ENCODE measurements at regions of chr10 and their contacts with region 1.

Region 1: DNA sequence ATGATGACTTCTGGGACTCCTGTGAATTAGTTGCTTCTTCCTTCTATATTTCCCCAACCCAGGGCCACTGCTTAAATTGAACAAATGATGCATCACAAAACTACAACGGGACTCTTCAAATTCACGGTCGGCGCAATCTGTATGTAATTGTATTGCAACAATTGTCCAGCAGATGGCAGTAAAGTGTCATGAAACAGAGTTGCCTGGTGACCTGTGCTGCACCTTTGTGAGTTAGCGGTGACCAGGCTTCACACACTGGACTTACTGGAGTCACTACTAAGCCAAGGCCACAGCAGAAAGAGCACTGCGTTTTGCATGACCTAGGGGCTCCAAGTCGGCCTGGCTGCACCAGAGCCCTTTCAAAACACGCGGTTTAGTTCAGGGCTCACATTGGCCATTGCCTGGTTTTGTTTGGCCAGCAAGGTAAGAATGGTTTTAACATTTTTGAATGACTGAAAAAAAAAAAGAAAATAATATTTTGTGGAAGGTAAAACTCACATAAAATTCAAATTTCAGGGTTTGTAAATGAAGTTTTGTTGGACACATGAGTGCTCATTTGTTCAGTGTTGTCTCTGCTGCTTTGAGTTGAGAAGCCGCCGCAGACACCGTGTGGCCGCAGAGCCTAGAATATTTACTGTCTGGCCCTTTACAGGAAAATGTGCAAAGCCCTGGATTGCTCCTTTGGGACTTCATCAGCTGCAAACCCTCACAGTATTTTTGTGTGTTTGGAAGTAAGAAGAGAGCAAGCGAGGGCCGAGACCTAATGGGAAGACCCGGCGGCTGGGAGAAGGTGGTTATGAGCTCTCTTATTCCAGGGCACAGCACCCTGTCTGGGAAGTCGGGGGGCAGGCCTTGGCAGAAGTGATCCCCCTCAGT is 23.2 kb upstream of the ZNF32 start:
- DNase-seq: peak in 1 of 2 donors; percentile 79
- H3K4me3 ChIP-seq: no peak overlapping the region
- H3K27ac ChIP-seq: no peak overlapping the region
- H3K4me1 ChIP-seq: no peaks in the 10 kb centered on the region
- H3K27me3 ChIP-seq: no peaks in the 10 kb centered on the region
- CTCF ChIP-seq: peak; percentile 73 to 89 (median 80)

Region 2: GRCh38 chr10:43471935-43472720 is 199.8 kb before region 1 on chr10:
- intact Hi-C with region 1: no loop called
- DNase-seq: no peak
- H3K4me3 ChIP-seq: no peak overlapping the region
- H3K27ac ChIP-seq: no peak overlapping the region
- H3K4me1 ChIP-seq: no peaks in the 10 kb centered on the region
- H3K27me3 ChIP-seq: no peaks in the 10 kb centered on the region
- CTCF ChIP-seq: no peak

Region 3: DNA sequence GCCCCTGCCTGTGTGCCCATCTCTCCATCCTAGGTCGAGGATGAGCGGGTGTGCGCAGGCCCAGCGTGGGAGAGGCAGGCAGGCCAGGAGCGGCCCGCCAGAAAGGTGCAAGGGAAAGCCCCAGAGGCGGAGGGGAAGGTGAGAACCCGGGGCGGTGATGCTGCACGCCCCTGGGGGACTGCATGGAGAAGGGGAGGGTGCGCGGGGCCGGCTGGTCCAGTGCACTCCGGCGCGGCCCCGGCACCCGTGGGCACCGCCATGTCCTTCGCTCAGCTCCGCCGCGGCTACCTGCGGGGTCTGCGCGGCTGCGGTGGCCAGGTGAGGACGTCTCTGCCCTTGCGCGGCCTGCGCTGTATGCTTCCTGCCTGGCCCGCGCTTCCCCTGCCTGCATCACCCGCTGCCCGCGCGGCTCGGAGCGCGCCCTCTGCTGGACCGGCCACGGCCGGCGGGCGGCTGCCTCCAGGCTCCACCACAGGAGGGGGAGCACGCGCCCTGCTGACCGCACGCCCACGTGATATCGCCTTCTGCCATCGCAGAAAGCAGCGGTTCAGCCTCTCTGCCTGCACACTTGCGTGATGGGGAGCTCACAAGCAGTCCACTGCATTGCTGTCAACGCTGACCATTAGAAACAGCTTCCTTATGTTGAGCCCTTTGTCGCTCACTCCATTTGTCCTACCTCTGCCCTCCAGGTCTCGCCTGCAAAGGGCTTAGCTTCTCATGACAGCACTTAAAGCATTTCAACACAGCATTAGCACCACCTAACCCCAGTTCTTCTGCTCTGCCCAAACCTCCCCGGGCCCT is 639.1 kb after region 1 on chr10:
- intact Hi-C with region 1: loop called (anchors 5 kb)
- DNase-seq: peak; percentile 40 to 92
- H3K4me3 ChIP-seq: peak overlapping the region; percentile 49 to 59
- H3K27ac ChIP-seq: no peak overlapping the region
- H3K4me1 ChIP-seq: peaks cover 0 to 5% of the 10 kb centered on the region in 2 donors
- H3K27me3 ChIP-seq: no peaks in the 10 kb centered on the region
- CTCF ChIP-seq: peak; percentile 94 to 97 (median 95)

Region 4: DNA sequence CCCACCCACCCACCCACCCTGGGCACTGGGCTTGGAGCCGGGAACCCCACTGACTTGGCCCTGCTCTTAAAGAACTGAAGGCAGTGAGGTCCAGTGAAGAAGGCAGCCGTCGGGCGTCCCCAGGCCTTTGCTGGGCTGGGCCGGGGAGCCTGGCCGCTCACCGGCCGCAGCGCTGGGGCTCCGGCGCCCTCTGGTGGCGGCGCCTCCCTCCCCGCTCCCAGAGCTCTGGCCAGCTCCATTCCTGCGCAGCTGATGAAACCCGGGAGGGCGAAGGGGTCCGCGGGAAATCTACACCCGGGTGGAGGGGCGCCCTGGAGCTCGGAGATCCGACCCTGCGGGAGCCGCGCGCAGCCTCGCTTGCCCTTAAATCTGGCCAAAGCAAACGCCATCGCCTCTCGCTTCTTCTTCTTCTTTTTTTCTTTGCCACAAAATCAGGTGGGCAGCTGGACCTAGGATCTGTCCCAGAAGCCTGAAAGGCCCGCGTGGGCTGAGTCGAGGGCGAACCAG is 714.7 kb after region 1 on chr10:
- intact Hi-C with region 1: loop called (anchors 1 kb)
- DNase-seq: peak in 1 of 2 donors; percentile 77
- H3K4me3 ChIP-seq: peak overlapping the region in 1 of 2 donors; percentile 28
- H3K27ac ChIP-seq: no peak overlapping the region
- H3K4me1 ChIP-seq: peaks cover 0 to 8% of the 10 kb centered on the region in 2 donors
- H3K27me3 ChIP-seq: no peaks in the 10 kb centered on the region
- CTCF ChIP-seq: peak; percentile 86 to 95 (median 91)

Region 5: GRCh38 chr10:44569193-44570091 is 897.5 kb after region 1 on chr10:
- intact Hi-C with region 1: loop called (anchors 10 kb)
- DNase-seq: peak in 1 of 2 donors; percentile 87
- H3K4me3 ChIP-seq: no peak overlapping the region
- H3K27ac ChIP-seq: peak overlapping the region; percentile 19 to 79
- H3K4me1 ChIP-seq: peaks cover 9 to 14% of the 10 kb centered on the region in 2 donors
- H3K27me3 ChIP-seq: no peaks in the 10 kb centered on the region
- CTCF ChIP-seq: no peak

Region 6: GRCh38 chr10:44724415-44725174 is 1052.7 kb after region 1 on chr10:
- intact Hi-C with region 1: loop called (anchors 5 kb)
- DNase-seq: no peak
- H3K4me3 ChIP-seq: no peak overlapping the region
- H3K27ac ChIP-seq: peak overlapping the region; percentile 22 to 36
- H3K4me1 ChIP-seq: peaks cover 3 to 20% of the 10 kb centered on the region in 2 donors
- H3K27me3 ChIP-seq: no peaks in the 10 kb centered on the region
- CTCF ChIP-seq: no peak

Region 7: DNA sequence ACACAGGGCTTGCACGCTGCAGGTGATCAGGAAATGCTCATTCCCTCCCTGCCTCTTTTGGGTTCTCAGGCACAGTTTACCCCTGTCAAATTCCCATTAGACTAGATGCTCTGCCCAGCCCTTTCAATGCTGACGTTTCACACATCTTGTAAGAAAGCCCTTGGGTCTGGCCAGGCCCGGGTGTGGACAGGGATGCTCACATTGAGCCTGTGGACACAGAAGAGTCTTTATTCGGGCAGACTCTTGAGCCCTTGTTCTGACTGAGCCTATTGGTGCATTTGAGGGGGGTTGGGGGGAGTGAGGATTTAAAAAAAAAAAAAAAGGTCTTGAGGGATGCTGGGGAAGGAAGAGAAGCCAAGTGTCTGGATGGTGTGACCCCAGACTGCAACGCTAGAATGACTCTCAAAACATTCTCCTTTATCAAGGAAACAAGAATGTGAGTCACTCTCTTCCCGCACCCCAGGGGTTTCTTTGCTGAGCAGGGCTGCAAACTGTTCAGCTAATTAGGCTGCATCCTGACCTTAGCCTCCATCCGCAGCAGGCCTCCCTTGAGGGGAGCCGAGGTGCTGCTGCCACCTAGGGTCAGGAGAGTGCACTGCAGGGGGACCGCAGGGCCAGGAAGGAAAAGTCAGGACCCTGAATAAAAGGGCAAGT is 1185.6 kb after region 1 on chr10:
- intact Hi-C with region 1: loop called (anchors 2 kb)
- DNase-seq: peak in 1 of 2 donors; percentile 72
- H3K4me3 ChIP-seq: no peak overlapping the region
- H3K27ac ChIP-seq: no peak overlapping the region
- H3K4me1 ChIP-seq: peaks cover 0 to 8% of the 10 kb centered on the region in 2 donors
- H3K27me3 ChIP-seq: no peaks in the 10 kb centered on the region
- CTCF ChIP-seq: peak; percentile 72 to 99 (median 99)

Region 8: GRCh38 chr10:44864637-44865288 is 1192.9 kb after region 1 on chr10:
- intact Hi-C with region 1: loop called (anchors 2 kb)
- DNase-seq: peak in 1 of 2 donors; percentile 93
- H3K4me3 ChIP-seq: peak overlapping the region; percentile 51 to 68
- H3K27ac ChIP-seq: peak overlapping the region; percentile 29 to 58
- H3K4me1 ChIP-seq: peaks cover 0 to 14% of the 10 kb centered on the region in 2 donors
- H3K27me3 ChIP-seq: no peaks in the 10 kb centered on the region
- CTCF ChIP-seq: peak; percentile 91 to 99 (median 93)